ENCODE measurements at regions of chr17 and their contacts with region 1.

Region 1: GRCh38 chr17:5419356-5419958 is at the start of gene NUP88:
- DNase-seq: peak; percentile 94 to 96
- H3K4me3 ChIP-seq: peak within 1 kb of the TSS; percentile 78 to 91 (median 90)
- H3K27ac ChIP-seq: peak within 1 kb of the TSS; percentile 89 to 92
- H3K4me1 ChIP-seq: peaks cover 0 to 28% of the 10 kb centered on the region in 2 donors
- H3K27me3 ChIP-seq: no peaks in the 10 kb centered on the region
- CTCF ChIP-seq: no peak
- POLR2A ChIP-seq: peak; percentile 74
- total RNA-seq, gene NUP88: 52.8 to 139 (median 102) TPM

Region 2: GRCh38 chr17:3678095-3678795 is 1741.2 kb before region 1 on chr17:
- intact Hi-C with region 1: loop called (anchors 10 kb)
- DNase-seq: no peak
- H3K4me3 ChIP-seq: no peak overlapping the region
- H3K27ac ChIP-seq: no peak overlapping the region
- H3K4me1 ChIP-seq: no peaks in the 10 kb centered on the region
- H3K27me3 ChIP-seq: peaks cover 0 to 13% of the 10 kb centered on the region in 2 donors
- CTCF ChIP-seq: no peak
- POLR2A ChIP-seq: no peak

Measured in breast epithelium (tissue), 4 donors.